ENCODE measurements at regions of chr17 and their contacts with region 1.

Region 1: DNA sequence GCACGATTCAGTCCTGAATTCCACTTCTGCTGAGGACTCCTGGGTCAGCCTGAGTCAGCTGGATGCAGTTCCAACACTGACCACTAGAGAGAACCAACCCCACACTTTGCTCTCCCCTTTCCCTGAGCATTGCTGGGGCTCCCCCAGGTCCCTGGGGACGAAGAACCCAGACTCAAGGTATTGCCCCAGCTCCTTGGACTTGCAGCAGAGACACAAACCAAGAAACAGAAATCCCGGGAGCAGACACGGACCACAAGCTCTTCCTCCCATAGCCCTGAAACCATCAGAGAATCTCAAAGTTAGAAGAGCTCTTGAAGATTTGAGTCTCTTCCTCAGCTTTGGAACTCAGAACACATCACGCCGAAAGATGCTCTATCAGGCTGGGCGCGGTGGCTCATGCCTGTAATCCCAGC is 678 bp upstream of the GH1 start:
- DNase-seq: peak; percentile 53 to 88 (median 72)
- ATAC-seq: peak; percentile 100
- H3K4me3 ChIP-seq: no peak overlapping the region
- H3K4me3 Mint-ChIP-seq: no peak overlapping the region
- H3K27ac ChIP-seq: no peak overlapping the region
- H3K27ac Mint-ChIP-seq: no peak overlapping the region
- H3K4me1 ChIP-seq: no peaks in the 10 kb centered on the region
- H3K4me1 Mint-ChIP-seq: peaks cover 8% of the 10 kb centered on the region
- H3K27me3 ChIP-seq: no peaks in the 10 kb centered on the region
- H3K27me3 Mint-ChIP-seq: no peaks in the 10 kb centered on the region
- CTCF ChIP-seq: peak; percentile 91

Region 2: DNA sequence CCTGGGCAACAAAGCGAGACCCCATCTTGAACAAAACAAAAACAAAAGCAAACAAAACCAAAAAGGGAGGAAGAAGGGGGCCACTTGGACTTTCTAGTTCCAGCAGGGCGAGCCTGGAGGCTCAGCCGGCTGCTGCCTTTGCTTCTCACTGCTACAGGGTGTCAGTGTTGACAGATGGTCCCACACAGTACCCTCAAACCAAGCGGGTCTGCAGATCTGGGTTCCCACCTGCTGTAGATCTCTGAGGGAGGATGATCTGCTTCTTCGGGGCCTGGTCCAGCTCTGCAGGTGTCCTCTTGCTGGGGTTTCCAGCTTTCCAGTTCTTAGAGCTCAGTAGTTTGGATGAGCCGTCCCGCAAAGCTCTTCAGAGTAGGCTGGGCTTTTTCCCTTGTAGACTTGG is 15.0 kb before region 1 on chr17:
- CTCF ChIA-PET with region 1: interaction called, 22 read pairs
- POLR2A ChIA-PET with region 1: no interaction called
- intact Hi-C with region 1: no loop called
- DNase-seq: no peak
- ATAC-seq: no peak
- H3K4me3 ChIP-seq: no peak overlapping the region
- H3K4me3 Mint-ChIP-seq: no peak overlapping the region
- H3K27ac ChIP-seq: no peak overlapping the region
- H3K27ac Mint-ChIP-seq: no peak overlapping the region
- H3K4me1 ChIP-seq: no peaks in the 10 kb centered on the region
- H3K4me1 Mint-ChIP-seq: peaks cover 4% of the 10 kb centered on the region
- H3K27me3 ChIP-seq: no peaks in the 10 kb centered on the region
- H3K27me3 Mint-ChIP-seq: no peaks in the 10 kb centered on the region
- CTCF ChIP-seq: no peak

Region 3: DNA sequence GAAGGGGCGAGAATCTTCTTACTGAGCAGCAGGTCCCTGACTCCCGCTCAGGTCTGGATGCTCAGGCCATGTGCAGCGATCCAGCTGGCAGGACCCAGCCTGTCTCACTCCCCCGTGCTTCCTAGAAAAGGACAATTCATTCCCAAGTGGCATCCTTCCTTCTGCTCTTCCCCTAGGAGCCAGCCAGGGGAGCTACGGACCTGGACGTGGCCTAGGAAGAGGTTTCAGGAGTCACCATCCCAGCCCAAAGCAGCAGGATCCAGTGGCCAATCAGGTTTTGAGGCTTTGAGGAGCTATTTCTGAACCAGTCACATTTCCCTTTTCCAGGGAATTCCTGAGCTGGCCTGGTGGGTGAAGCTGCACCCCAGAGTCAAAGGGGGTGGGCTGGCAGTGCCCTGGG is 20.6 kb after region 1 on chr17:
- CTCF ChIA-PET with region 1: interaction called, 18 read pairs
- POLR2A ChIA-PET with region 1: no interaction called
- intact Hi-C with region 1: no loop called
- DNase-seq: no peak
- ATAC-seq: no peak
- H3K4me3 ChIP-seq: no peak overlapping the region
- H3K4me3 Mint-ChIP-seq: no peak overlapping the region
- H3K27ac ChIP-seq: no peak overlapping the region
- H3K27ac Mint-ChIP-seq: no peak overlapping the region
- H3K4me1 ChIP-seq: no peaks in the 10 kb centered on the region
- H3K4me1 Mint-ChIP-seq: peaks cover 2% of the 10 kb centered on the region
- H3K27me3 ChIP-seq: peaks cover 0 to 2% of the 10 kb centered on the region in 2 experiments
- H3K27me3 Mint-ChIP-seq: no peaks in the 10 kb centered on the region
- CTCF ChIP-seq: no peak

Region 4: GRCh38 chr17:63974594-63975192 is 55.4 kb after region 1 on chr17:
- CTCF ChIA-PET with region 1: interaction called, 22 read pairs
- POLR2A ChIA-PET with region 1: no interaction called
- intact Hi-C with region 1: no loop called
- DNase-seq: no peak
- ATAC-seq: no peak
- H3K4me3 ChIP-seq: no peak overlapping the region
- H3K4me3 Mint-ChIP-seq: no peak overlapping the region
- H3K27ac ChIP-seq: no peak overlapping the region
- H3K27ac Mint-ChIP-seq: no peak overlapping the region
- H3K4me1 ChIP-seq: no peaks in the 10 kb centered on the region
- H3K4me1 Mint-ChIP-seq: peaks cover 10% of the 10 kb centered on the region
- H3K27me3 ChIP-seq: no peaks in the 10 kb centered on the region
- H3K27me3 Mint-ChIP-seq: no peaks in the 10 kb centered on the region
- CTCF ChIP-seq: no peak

Region 5: DNA sequence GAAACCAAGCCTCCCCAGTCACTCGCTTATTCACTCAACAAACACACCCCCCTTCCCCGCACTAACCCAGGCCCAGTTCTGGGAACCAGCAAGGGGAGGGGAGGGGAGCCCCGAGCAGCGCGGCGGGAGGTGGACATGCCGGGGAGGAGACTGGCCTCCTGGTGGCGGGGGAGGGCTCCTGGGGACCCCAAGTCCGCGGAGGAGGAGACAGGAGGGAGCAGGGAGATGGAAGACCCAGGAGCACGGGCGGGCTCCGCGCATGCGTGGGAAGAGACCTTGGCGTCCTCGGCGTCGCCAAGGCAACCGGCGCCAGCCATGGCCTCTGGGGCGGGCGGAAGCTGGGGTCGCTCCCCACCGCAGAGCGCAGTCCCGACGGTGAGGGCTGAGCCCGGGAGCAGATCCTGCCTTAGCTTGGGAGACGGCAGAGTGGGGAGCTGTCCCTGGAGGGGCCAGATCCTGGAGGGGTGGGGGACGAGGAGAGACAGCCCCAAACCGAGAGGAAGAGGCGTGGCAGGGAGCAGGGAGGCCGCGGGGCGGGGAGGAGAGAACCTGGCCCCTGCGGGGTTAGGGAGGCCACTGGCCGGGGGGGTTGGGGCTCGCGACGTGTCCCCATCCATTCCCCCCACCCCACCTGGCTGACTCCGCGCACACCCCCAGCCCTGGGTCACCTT is 78.9 kb after region 1 on chr17 and contains the start of gene PRR29:
- CTCF ChIA-PET with region 1: interaction called, 28 read pairs
- POLR2A ChIA-PET with region 1: no interaction called
- intact Hi-C with region 1: no loop called
- DNase-seq: peak; percentile 56 to 90 (median 75)
- ATAC-seq: peak; percentile 69
- H3K4me3 ChIP-seq: peak within 1 kb of the TSS; percentile 64 to 78
- H3K4me3 Mint-ChIP-seq: peak within 1 kb of the TSS; percentile 89
- H3K27ac ChIP-seq: no peak within 1 kb of the TSS
- H3K27ac Mint-ChIP-seq: peak within 1 kb of the TSS; percentile 75
- H3K4me1 ChIP-seq: peaks cover 29% of the 10 kb centered on the region
- H3K4me1 Mint-ChIP-seq: peaks cover 40% of the 10 kb centered on the region
- H3K27me3 ChIP-seq: no peaks in the 10 kb centered on the region
- H3K27me3 Mint-ChIP-seq: no peaks in the 10 kb centered on the region
- CTCF ChIP-seq: no peak
- total RNA-seq, gene PRR29: 0.24 to 0.97 TPM

Region 6: GRCh38 chr17:64051153-64051552 is 131.8 kb after region 1 on chr17:
- CTCF ChIA-PET with region 1: interaction called, 11 read pairs
- POLR2A ChIA-PET with region 1: interaction called, 4 read pairs
- intact Hi-C with region 1: no loop called
- DNase-seq: peak in 3 of 9 experiments; percentile 10 to 78 (median 67)
- ATAC-seq: peak; percentile 99
- H3K4me3 ChIP-seq: no peak overlapping the region
- H3K4me3 Mint-ChIP-seq: no peak overlapping the region
- H3K27ac ChIP-seq: peak overlapping the region; percentile 6 to 70
- H3K27ac Mint-ChIP-seq: peak overlapping the region; percentile 88
- H3K4me1 ChIP-seq: peaks cover 26% of the 10 kb centered on the region
- H3K4me1 Mint-ChIP-seq: peaks cover 35% of the 10 kb centered on the region
- H3K27me3 ChIP-seq: no peaks in the 10 kb centered on the region
- H3K27me3 Mint-ChIP-seq: no peaks in the 10 kb centered on the region
- CTCF ChIP-seq: no peak

Measured in CD8-positive, alpha-beta T cell (primary cell).